ENCODE measurements at regions of chr5 and their contacts with region 1.

Region 1: GRCh38 chr5:54517174-54518092 is at the start of gene SNX18:
- DNase-seq: peak; percentile 92 to 93
- ATAC-seq: peak; percentile 87 to 95 (median 93)
- H3K4me3 ChIP-seq: peak within 1 kb of the TSS; percentile 52 to 100 (median 98)
- H3K27ac ChIP-seq: peak within 1 kb of the TSS; percentile 95 to 99 (median 97)
- H3K4me1 ChIP-seq: peaks cover 4 to 45% (median 39%) of the 10 kb centered on the region in 9 donors
- H3K27me3 ChIP-seq: no peaks in the 10 kb centered on the region
- CTCF ChIP-seq: peak; percentile 95 to 100 (median 98)
- total RNA-seq, gene SNX18: 15.3 to 31.0 (median 22.1) TPM

Region 2: DNA sequence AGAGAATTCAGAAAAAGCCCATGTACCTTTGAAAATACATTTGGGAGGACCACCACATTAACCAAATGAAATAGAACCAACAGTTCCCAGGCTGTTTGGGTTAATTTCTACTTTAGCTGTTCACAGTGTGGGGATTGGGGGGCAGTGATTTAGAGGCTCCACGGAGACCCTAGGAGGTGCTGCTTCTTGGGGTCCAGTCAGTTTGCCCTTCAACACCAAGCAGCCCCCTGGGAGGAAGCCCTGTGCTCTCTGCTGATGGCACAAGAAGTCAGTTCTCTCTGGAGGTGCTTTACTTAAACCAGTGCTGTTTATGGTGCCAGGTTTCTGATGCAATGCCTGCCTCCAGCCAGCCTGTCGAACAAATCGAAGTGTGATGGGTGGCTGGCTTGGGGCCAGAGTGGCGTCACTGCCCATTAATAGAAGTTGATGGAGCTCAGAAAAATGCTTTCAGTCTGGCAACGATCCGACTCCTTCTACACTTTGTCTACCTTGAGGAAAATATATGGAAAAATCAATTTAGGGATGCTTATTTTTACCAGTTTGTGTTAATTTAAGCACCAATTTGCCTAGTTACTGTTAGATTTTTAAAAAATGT is 134.1 kb after region 1 on chr5:
- intact Hi-C with region 1: loop called in 7 of 10 experiments (anchors 1 to 5 kb)
- DNase-seq: peak; percentile 82 to 85
- ATAC-seq: peak in 6 of 8 donors; percentile 55 to 76 (median 66)
- H3K4me3 ChIP-seq: no peak overlapping the region
- H3K27ac ChIP-seq: peak overlapping the region in 6 of 10 donors; percentile 11 to 77 (median 64)
- H3K4me1 ChIP-seq: peaks cover 5 to 49% (median 21%) of the 10 kb centered on the region in 9 donors
- H3K27me3 ChIP-seq: no peaks in the 10 kb centered on the region
- CTCF ChIP-seq: no peak

Region 3: DNA sequence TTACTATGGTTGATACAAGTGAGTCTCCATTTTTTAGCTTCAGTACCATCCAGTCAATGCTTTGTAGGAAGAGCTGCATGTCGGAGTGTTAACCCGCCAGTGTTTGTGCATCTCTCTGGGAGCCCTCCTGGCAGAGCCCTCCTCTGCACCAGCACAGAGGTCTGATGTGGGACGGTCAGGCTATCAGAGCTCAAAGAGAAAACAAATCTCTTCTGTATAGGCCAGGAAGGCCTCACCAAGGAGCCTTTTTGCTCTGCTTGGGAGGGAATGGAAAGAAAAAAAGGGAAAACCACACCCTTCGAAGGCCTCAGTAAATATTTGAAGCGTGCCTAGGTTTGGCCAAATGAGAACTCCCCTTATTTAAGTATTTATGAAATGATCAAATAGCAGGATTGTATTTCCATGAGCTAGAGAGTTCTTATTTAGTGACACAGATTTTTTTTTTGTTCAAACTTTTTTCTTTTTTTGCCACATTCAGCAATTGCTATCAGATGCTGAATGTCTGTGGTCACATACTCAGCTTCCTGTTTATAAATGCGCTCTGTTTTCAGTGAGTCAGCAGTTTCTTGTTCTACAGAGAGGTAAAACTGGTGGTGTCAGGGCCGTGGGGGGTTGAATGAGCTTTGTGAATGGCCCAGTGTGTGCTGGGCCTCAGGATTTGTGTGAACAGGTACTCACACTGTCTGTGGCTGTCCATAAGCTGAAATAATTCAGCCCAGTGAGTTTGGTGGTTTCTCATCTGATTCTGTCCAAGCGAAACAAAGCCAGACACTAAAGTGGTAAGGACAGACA is 226.8 kb after region 1 on chr5:
- intact Hi-C with region 1: loop called in 7 of 10 experiments (anchors 2 to 10 kb)
- DNase-seq: no peak
- ATAC-seq: peak in 7 of 8 donors; percentile 41 to 81 (median 71)
- H3K4me3 ChIP-seq: no peak overlapping the region
- H3K27ac ChIP-seq: peak overlapping the region in 8 of 10 donors; percentile 15 to 93 (median 46)
- H3K4me1 ChIP-seq: peaks cover 0 to 45% (median 21%) of the 10 kb centered on the region in 9 donors
- H3K27me3 ChIP-seq: no peaks in the 10 kb centered on the region
- CTCF ChIP-seq: no peak

Region 4: GRCh38 chr5:54861212-54861894 is 343.9 kb after region 1 on chr5:
- intact Hi-C with region 1: loop called in 5 of 10 experiments (anchors 5 kb)
- DNase-seq: no peak
- ATAC-seq: no peak
- H3K4me3 ChIP-seq: no peak overlapping the region
- H3K27ac ChIP-seq: no peak overlapping the region
- H3K4me1 ChIP-seq: peaks cover 0 to 13% (median 0%) of the 10 kb centered on the region in 9 donors
- H3K27me3 ChIP-seq: no peaks in the 10 kb centered on the region
- CTCF ChIP-seq: no peak

Measured in heart right ventricle (tissue), 16 donors.